ENCODE measurements at regions of chr6 and their contacts with region 1.

Region 1: DNA sequence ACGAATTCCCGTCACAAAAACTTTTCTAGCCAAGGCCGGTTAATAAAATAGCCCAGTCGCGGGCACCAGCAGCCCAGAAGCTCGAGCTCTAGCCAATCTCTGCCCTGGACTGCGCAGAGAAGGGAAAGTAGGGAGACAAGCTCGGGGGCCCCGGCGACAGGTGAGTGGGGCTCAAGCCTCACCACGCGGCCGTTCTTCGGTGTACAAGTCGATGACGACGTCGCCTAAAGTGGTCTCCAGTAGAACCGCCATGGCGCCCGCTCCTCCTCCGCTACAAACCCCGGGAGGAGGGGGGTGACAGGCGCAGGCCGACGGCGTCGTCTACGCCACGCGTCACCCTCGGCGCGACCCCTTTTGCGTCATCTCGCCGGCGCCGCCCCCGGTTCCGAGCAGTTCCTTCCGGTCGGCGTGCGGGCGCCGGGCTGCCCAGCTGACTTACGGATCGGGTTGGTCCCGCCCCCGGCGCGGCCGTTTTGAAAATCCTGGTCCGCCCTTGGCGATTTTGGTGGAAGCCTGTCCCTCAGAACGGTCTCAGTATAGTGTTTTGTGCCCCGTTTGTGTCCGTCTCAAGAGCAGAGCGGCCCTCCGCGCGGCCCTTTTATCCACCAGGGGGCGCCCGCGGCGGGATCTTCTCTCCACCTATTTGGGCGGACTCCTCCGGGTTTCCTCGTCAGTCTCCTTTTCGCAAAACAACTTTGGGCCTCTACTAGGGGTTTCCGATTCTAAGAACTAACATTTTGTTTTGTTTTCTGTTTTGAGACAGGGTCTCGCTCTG is at the start of gene PPIL4:
- DNase-seq: peak; percentile 94 to 98 (median 97)
- ATAC-seq: peak; percentile 93
- H3K4me3 ChIP-seq: peak within 1 kb of the TSS; percentile 90
- H3K4me3 Mint-ChIP-seq: peak within 1 kb of the TSS; percentile 86 to 100 (median 98)
- H3K27ac ChIP-seq: peak within 1 kb of the TSS; percentile 99
- H3K27ac Mint-ChIP-seq: peak within 1 kb of the TSS; percentile 91 to 100 (median 99)
- H3K4me1 ChIP-seq: peaks cover 19 to 22% of the 10 kb centered on the region in 2 donors
- H3K4me1 Mint-ChIP-seq: peaks cover 31 to 51% (median 41%) of the 10 kb centered on the region in 7 donors
- H3K27me3 ChIP-seq: no peaks in the 10 kb centered on the region
- H3K27me3 Mint-ChIP-seq: peaks cover 0 to 15% (median 6%) of the 10 kb centered on the region in 5 donors
- total RNA-seq, gene PPIL4: 21.0 to 42.9 (median 35.7) TPM

Region 2: GRCh38 chr6:148790817-148791216 is 755.1 kb before region 1 on chr6:
- CTCF ChIA-PET with region 1: no interaction called
- POLR2A ChIA-PET with region 1: no interaction called
- intact Hi-C with region 1: no loop called
- DNase-seq: no peak
- ATAC-seq: no peak
- H3K4me3 ChIP-seq: no peak overlapping the region
- H3K4me3 Mint-ChIP-seq: no peak overlapping the region
- H3K27ac ChIP-seq: no peak overlapping the region
- H3K27ac Mint-ChIP-seq: no peak overlapping the region
- H3K4me1 ChIP-seq: no peaks in the 10 kb centered on the region
- H3K4me1 Mint-ChIP-seq: no peaks in the 10 kb centered on the region
- H3K27me3 ChIP-seq: no peaks in the 10 kb centered on the region
- H3K27me3 Mint-ChIP-seq: peaks cover 4 to 38% (median 23%) of the 10 kb centered on the region in 5 donors

Region 3: DNA sequence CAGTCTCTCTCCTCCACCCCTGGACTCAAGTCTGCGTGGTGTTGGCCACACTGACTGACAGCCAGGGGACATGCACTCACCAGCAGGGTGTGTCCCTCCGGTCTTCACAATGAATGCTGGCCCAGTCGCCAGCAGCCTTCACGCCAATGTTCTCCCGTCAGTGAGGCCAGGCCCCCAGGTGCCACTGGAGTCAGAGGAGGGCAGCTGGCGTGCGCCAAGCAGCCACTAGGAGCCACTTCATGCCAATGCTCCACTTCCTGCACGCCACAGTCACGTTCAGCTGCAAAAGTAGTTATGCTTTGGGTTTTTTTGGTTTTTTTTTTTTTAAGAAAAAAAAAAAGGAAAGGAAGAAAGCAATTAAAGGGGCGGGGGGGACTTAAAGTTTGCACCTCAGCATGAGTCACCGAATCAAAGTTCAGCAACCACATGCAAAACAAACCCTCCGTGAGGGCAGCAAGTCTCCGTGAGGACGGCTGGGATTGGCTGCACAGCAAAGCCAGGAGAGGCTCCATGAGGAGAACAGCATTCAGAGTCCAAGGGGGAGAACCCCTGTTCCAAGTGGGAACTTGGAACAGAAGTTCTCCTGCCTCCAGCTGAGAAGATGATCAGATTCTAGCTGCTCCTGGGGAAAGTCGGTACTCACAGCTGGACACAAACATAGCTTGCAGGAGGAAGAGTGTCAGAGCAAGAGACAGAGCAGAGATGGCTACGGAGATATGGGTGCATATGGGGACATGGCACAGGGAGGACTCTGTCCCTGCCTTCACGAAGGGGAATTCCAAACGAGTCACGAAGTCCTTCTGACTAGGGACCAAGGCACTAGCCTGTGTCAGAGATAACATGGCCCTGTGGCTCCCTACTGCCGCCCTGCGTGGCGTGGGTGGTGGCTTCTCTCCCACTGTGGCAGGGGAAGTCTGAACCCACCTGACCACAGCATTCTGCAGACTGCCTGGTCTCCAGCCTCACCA is 60.9 kb before region 1 on chr6 and contains the start of gene ZC3H12D:
- CTCF ChIA-PET with region 1: interaction called, 4 read pairs
- POLR2A ChIA-PET with region 1: interaction called, 7 read pairs
- intact Hi-C with region 1: loop called (anchors 1 kb)
- DNase-seq: peak; percentile 65 to 85 (median 79)
- ATAC-seq: peak; percentile 83
- H3K4me3 ChIP-seq: peak within 1 kb of the TSS; percentile 57
- H3K4me3 Mint-ChIP-seq: peak within 1 kb of the TSS; percentile 85 to 95 (median 92)
- H3K27ac ChIP-seq: peak within 1 kb of the TSS; percentile 90
- H3K27ac Mint-ChIP-seq: peak within 1 kb of the TSS; percentile 94 to 100 (median 98)
- H3K4me1 ChIP-seq: peaks cover 25 to 41% of the 10 kb centered on the region in 2 donors
- H3K4me1 Mint-ChIP-seq: peaks cover 34 to 68% (median 57%) of the 10 kb centered on the region in 7 donors
- H3K27me3 ChIP-seq: no peaks in the 10 kb centered on the region
- H3K27me3 Mint-ChIP-seq: no peaks in the 10 kb centered on the region
- total RNA-seq, gene ZC3H12D: 30.1 to 85.6 (median 74.1) TPM

Region 4: GRCh38 chr6:149529650-149530049 is 16.3 kb before region 1 on chr6:
- CTCF ChIA-PET with region 1: interaction called, 3 read pairs
- POLR2A ChIA-PET with region 1: interaction called, 3 read pairs
- intact Hi-C with region 1: loop called in 1 of 2 experiments (anchors 2 kb)
- DNase-seq: no peak
- ATAC-seq: no peak
- H3K4me3 ChIP-seq: no peak overlapping the region
- H3K4me3 Mint-ChIP-seq: no peak overlapping the region
- H3K27ac ChIP-seq: no peak overlapping the region
- H3K27ac Mint-ChIP-seq: peak overlapping the region in 1 of 9 donors; percentile 18
- H3K4me1 ChIP-seq: no peaks in the 10 kb centered on the region
- H3K4me1 Mint-ChIP-seq: peaks cover 4 to 11% (median 8%) of the 10 kb centered on the region in 7 donors
- H3K27me3 ChIP-seq: no peaks in the 10 kb centered on the region
- H3K27me3 Mint-ChIP-seq: no peaks in the 10 kb centered on the region

Region 5: GRCh38 chr6:149648148-149649145 is 102.5 kb after region 1 on chr6 and contains the start of gene KATNA1:
- CTCF ChIA-PET with region 1: interaction called, 4 read pairs
- POLR2A ChIA-PET with region 1: no interaction called
- intact Hi-C with region 1: loop called (anchors 1 kb)
- DNase-seq: peak; percentile 69 to 95 (median 81)
- ATAC-seq: peak; percentile 96
- H3K4me3 ChIP-seq: peak within 1 kb of the TSS; percentile 91
- H3K4me3 Mint-ChIP-seq: peak within 1 kb of the TSS; percentile 83 to 96 (median 91)
- H3K27ac ChIP-seq: peak within 1 kb of the TSS; percentile 82
- H3K27ac Mint-ChIP-seq: peak within 1 kb of the TSS; percentile 82 to 95 (median 90)
- H3K4me1 ChIP-seq: peaks cover 7 to 17% of the 10 kb centered on the region in 2 donors
- H3K4me1 Mint-ChIP-seq: peaks cover 2 to 41% (median 33%) of the 10 kb centered on the region in 7 donors
- H3K27me3 ChIP-seq: no peaks in the 10 kb centered on the region
- H3K27me3 Mint-ChIP-seq: no peaks in the 10 kb centered on the region
- total RNA-seq, gene KATNA1: 14.1 to 22.6 (median 16.7) TPM

Region 6: DNA sequence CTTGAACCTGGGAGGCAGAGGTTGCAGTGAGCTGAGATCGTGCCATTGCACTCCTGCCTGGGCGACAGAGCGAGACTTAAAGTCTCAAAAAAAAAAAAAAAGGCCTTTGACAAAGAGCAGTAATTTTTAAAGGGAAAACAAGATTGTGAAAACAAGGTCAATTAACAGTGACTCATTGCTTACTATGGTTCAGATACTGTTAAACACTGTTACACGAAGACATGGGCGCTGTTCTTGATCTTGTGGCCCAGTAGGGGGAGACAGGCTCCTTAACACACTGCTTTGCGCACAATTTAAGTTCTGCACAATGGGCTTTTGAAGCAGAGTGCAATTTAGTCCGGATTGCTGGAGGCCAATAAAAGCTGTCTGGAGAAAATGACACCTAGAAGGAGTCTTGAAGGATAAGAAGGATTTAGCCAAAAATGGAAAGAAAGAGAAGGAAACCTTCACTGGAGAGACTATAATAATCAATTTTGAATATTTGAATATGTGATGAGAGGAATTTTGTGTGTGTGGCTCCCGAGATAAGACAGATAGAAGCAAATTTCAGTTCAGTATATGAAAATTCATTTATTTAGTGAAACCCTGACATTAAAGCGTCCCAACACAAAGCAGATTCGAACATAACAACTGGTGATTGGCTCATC is 178.0 kb after region 1 on chr6:
- CTCF ChIA-PET with region 1: no interaction called
- POLR2A ChIA-PET with region 1: interaction called, 18 read pairs
- intact Hi-C with region 1: loop called in 1 of 2 experiments (anchors 1 kb)
- DNase-seq: peak in 7 of 9 donors; percentile 29 to 50 (median 43)
- ATAC-seq: peak; percentile 93
- H3K4me3 ChIP-seq: no peak overlapping the region
- H3K4me3 Mint-ChIP-seq: no peak overlapping the region
- H3K27ac ChIP-seq: no peak overlapping the region
- H3K27ac Mint-ChIP-seq: peak overlapping the region in 4 of 9 donors; percentile 10 to 78 (median 34)
- H3K4me1 ChIP-seq: peaks cover 3 to 13% of the 10 kb centered on the region in 2 donors
- H3K4me1 Mint-ChIP-seq: peaks cover 16 to 30% (median 24%) of the 10 kb centered on the region in 7 donors
- H3K27me3 ChIP-seq: no peaks in the 10 kb centered on the region
- H3K27me3 Mint-ChIP-seq: no peaks in the 10 kb centered on the region

Region 7: GRCh38 chr6:149834513-149835481 is 288.9 kb after region 1 on chr6:
- CTCF ChIA-PET with region 1: no interaction called
- POLR2A ChIA-PET with region 1: no interaction called
- intact Hi-C with region 1: loop called in 1 of 2 experiments (anchors 1 kb)
- DNase-seq: peak; percentile 50 to 85 (median 75)
- ATAC-seq: peak; percentile 92
- H3K4me3 ChIP-seq: no peak overlapping the region
- H3K4me3 Mint-ChIP-seq: no peak overlapping the region
- H3K27ac ChIP-seq: no peak overlapping the region
- H3K27ac Mint-ChIP-seq: no peak overlapping the region
- H3K4me1 ChIP-seq: no peaks in the 10 kb centered on the region
- H3K4me1 Mint-ChIP-seq: peaks cover 0 to 5% (median 4%) of the 10 kb centered on the region in 7 donors
- H3K27me3 ChIP-seq: no peaks in the 10 kb centered on the region
- H3K27me3 Mint-ChIP-seq: peaks cover 0 to 19% (median 4%) of the 10 kb centered on the region in 5 donors

Region 8: DNA sequence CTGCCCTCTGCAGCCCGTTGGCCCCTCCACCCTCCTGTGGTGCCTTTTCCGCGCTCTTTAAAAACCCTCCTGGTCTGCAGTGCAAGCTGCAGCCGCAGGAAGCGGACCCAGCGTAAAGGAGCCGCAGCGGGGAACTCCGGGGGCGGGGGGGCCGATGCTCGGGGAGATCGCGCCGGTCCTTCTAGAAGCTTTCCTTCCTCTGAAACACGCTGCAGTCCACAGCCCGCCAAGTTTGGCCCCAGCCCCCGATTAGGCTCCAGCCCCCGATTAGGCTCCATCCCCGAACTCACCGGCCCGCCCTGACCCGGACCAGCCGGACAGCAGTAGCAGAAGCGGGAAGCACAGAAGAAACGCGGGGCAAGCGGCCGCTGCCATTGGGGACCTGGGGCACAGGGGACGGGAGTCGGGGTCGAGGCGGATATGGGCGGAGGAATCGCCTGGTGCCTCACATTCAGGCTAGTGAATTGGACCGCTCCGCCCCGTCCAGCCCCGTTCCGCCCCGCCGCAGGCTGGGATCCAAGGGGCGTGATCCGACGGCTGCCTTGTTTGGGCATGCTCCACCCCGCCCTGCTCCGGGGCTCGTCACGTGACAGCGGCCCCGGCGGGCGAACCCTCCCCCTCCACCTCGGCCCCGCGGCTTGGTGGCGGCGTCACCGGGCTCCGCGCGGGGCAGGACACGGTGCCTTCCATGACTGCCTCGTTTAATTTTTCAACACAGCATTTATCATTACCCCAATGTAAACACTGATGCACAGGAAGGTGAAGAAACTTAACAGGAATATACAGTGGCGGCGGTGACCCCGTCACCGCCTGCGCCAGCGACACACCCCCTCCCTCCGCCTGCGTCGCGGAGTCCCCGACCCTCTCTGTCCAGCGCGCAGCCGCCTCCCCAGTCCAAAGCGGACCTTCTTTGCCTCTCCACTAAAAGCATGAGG is 459.1 kb after region 1 on chr6:
- CTCF ChIA-PET with region 1: no interaction called
- POLR2A ChIA-PET with region 1: no interaction called
- intact Hi-C with region 1: loop called in 1 of 2 experiments (anchors 5 kb)
- DNase-seq: peak; percentile 73 to 91 (median 82)
- ATAC-seq: peak; percentile 89
- H3K4me3 ChIP-seq: peak overlapping the region; percentile 87
- H3K4me3 Mint-ChIP-seq: peak overlapping the region; percentile 78 to 96 (median 91)
- H3K27ac ChIP-seq: peak overlapping the region; percentile 75
- H3K27ac Mint-ChIP-seq: peak overlapping the region; percentile 31 to 95 (median 85)
- H3K4me1 ChIP-seq: peaks cover 13 to 31% of the 10 kb centered on the region in 2 donors
- H3K4me1 Mint-ChIP-seq: peaks cover 7 to 56% (median 20%) of the 10 kb centered on the region in 7 donors
- H3K27me3 ChIP-seq: peaks cover 0 to 3% of the 10 kb centered on the region in 2 donors
- H3K27me3 Mint-ChIP-seq: peaks cover 15 to 35% (median 19%) of the 10 kb centered on the region in 5 donors

Region 9: GRCh38 chr6:150091476-150091875 is 545.5 kb after region 1 on chr6:
- CTCF ChIA-PET with region 1: no interaction called
- POLR2A ChIA-PET with region 1: no interaction called
- intact Hi-C with region 1: no loop called
- DNase-seq: no peak
- ATAC-seq: no peak
- H3K4me3 ChIP-seq: no peak overlapping the region
- H3K4me3 Mint-ChIP-seq: no peak overlapping the region
- H3K27ac ChIP-seq: no peak overlapping the region
- H3K27ac Mint-ChIP-seq: no peak overlapping the region
- H3K4me1 ChIP-seq: no peaks in the 10 kb centered on the region
- H3K4me1 Mint-ChIP-seq: peaks cover 0 to 4% (median 0%) of the 10 kb centered on the region in 7 donors
- H3K27me3 ChIP-seq: no peaks in the 10 kb centered on the region
- H3K27me3 Mint-ChIP-seq: peaks cover 5 to 13% (median 12%) of the 10 kb centered on the region in 5 donors

Measured in naive thymus-derived CD4-positive, alpha-beta T cell (primary cell).